Heart left ventricle (tissue), 16 donors: ENCODE measurements at regions of chr10 and their contacts with region 1.

Region 1: DNA sequence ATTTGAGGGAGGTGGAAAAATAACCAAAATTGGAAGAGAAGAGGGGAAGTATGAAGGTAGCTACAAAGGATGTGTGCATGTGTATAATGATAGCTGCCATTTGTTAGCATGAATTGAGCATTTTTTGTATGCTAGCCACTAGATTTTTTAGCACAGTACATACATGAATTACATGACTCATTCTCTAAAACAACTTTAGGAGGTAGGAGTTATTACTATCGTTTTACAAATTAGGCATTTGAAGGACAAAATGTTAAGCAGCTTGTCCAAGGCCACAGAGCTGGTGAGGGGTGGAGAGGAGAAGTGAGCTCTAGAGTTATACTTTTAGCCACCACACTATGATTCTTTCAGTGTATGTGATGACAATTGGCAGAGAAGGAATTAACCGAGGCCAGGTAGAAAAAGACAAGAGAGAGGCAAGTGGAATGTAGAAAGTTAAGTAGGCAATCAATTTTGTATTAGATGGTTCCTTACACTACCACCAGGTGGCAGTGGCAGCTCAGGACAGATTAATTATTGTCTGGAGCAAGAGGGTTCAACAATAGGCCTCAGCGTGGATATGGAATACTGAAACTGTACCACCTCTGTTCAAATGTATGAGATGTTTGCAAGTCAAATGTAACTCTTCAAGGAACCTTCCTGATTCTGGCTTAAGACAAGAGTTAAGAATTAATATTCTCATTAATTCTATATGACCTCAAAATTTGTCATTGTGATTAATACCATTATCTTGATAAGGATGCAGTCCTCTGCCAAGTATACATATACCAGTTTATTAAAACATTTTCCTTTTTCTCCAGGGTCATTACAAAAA is 128.0 kb downstream of the MBL2 start:
- DNase-seq: peak in 3 of 5 donors; percentile 10 to 42 (median 21)
- ATAC-seq: peak in 3 of 4 donors; percentile 67 to 72 (median 70)
- H3K4me3 ChIP-seq: no peak overlapping the region
- H3K27ac ChIP-seq: no peak overlapping the region
- H3K4me1 ChIP-seq: peaks cover 0 to 3% (median 0%) of the 10 kb centered on the region in 12 donors
- H3K27me3 ChIP-seq: no peaks in the 10 kb centered on the region
- CTCF ChIP-seq: peak; percentile 53 to 81 (median 66)
- POLR2A ChIP-seq: no peak

Region 2: GRCh38 chr10:52729271-52730104 is 84.9 kb after region 1 on chr10:
- intact Hi-C with region 1: loop called (anchors 1 to 5 kb)
- DNase-seq: no peak
- ATAC-seq: peak in 1 of 4 donors; percentile 52
- H3K4me3 ChIP-seq: peak overlapping the region in 1 of 12 donors; percentile 30
- H3K27ac ChIP-seq: no peak overlapping the region
- H3K4me1 ChIP-seq: no peaks in the 10 kb centered on the region
- H3K27me3 ChIP-seq: no peaks in the 10 kb centered on the region
- CTCF ChIP-seq: peak; percentile 23 to 63 (median 48)
- POLR2A ChIP-seq: no peak

Region 3: DNA sequence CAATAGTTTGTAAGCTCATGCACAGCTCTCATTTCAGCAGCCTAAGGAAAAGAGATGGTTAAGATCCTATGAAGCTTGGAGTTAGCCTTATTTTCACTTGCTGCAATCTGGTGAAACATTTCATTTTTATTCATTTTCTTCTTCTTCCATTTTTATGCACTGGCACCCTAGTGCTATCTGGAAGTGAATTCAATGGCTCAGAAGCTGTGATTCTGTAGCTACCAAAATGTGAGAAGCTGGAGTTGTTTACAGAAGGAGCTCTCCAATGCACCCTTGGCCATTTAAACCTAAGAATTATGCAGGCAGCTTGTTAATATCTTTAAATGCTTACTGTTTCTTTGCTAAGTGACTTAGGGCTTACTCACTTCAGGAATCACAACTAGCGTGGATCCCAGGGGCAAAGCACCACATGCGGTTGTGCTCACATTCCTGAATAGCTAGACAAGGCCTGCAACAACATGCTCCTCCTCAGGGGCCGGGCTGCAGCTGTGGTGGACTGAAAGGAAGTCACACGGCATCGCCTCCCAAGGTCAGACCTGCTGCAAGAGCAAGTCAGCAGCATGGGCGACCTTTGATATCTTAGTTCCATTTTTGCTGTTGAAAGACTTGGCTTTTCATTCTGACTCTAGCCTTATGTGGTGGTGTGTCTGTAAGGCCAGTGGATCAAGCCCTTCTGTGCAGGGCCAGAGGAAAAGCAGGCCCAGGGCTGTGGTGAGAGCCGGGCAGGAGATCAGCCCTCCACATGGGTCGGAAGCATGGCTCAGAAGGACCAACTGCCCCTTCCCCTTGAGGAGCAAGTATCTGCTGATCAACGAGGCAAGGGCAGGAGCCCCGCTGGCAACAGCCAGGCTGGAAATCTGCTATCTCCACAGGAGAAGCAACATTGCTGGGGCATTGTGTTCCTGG is 219.9 kb after region 1 on chr10:
- intact Hi-C with region 1: no loop called
- DNase-seq: peak; percentile 38 to 76 (median 68)
- ATAC-seq: peak in 3 of 4 donors; percentile 81 to 88 (median 83)
- H3K4me3 ChIP-seq: no peak overlapping the region
- H3K27ac ChIP-seq: no peak overlapping the region
- H3K4me1 ChIP-seq: peaks cover 0 to 12% (median 0%) of the 10 kb centered on the region in 12 donors
- H3K27me3 ChIP-seq: no peaks in the 10 kb centered on the region
- CTCF ChIP-seq: no peak
- POLR2A ChIP-seq: no peak